Panc1 (cell line): ENCODE measurements at regions of chr10 and their contacts with region 1.

Region 1: GRCh38 chr10:97388152-97388551 is 13.0 kb downstream of the RRP12 start:
- DNase-seq: no peak
- ATAC-seq: peak; percentile 21; the same call in 1 of the 2 replicates
- H3K4me3 ChIP-seq: no peak overlapping the region
- H3K27ac ChIP-seq: no peak overlapping the region
- H3K4me1 ChIP-seq: no peaks in the 10 kb centered on the region
- H3K27me3 ChIP-seq: no peaks in the 10 kb centered on the region
- CTCF ChIP-seq: no peak

Region 2: DNA sequence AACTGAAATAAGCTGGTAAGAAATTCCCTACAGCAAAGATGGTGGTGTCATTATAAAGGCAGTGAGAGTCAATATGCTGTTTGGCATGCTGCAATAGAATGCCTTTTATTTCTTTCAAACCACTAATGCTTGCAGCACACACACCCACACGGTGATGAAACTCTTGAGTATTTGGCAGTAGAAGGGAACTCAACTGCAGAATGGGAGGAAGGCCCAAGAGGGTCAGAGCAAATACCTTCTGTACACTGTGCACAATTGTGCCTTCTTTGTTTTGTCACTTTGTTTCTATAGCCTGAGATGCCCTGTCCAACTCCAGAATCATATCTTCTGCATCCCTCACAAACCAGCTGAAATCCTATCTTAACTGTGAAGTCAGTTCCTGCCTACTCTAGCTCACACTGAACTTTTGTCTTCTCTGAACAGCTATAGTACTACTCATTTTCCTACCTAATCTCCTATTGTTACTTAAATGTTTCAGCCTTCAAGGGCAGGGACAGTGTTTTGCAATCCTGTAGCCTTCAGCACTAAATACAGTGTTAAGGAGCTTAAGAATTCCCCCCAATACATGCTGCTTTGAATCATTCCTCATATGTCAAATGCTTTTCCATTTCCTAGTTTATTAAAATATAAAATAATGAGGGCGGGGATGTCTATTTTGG is 87.9 kb after region 1 on chr10:
- CTCF ChIA-PET with region 1: no interaction called
- POLR2A ChIA-PET with region 1: interaction called, 17 read pairs
- in situ Hi-C with region 1: no loop called
- intact Hi-C with region 1: no loop called
- DNase-seq: no peak
- ATAC-seq: no peak
- H3K4me3 ChIP-seq: no peak overlapping the region
- H3K27ac ChIP-seq: no peak overlapping the region
- H3K4me1 ChIP-seq: peaks cover 5% of the 10 kb centered on the region; the same call in 1 of the 2 replicates
- H3K27me3 ChIP-seq: no peaks in the 10 kb centered on the region
- CTCF ChIP-seq: no peak